Activated CD4-positive, alpha-beta memory T cell treated with anti-CD3 and anti-CD28 coated beads, Interleukin-2, amount 10 ng/mL, durations not matched to agents 7 days and 5 days (primary cell): ENCODE measurements at regions of chr11 and their contacts with region 1.

Region 1: GRCh38 chr11:95067039-95067840 is 521 bp downstream of the SRSF8 start:
- DNase-seq: peak; percentile 76
- H3K4me3 Mint-ChIP-seq: peak overlapping the region; percentile 92
- H3K27ac Mint-ChIP-seq: peak overlapping the region; percentile 94
- H3K4me1 Mint-ChIP-seq: peaks cover 25% of the 10 kb centered on the region
- H3K27me3 Mint-ChIP-seq: peaks cover under 1% of the 10 kb centered on the region

Region 2: GRCh38 chr11:94128746-94129511 is 938.3 kb before region 1 on chr11 and contains the start of gene PANX1:
- CTCF ChIA-PET with region 1: no interaction called
- POLR2A ChIA-PET with region 1: interaction called, 11 read pairs
- DNase-seq: peak; percentile 77
- H3K4me3 Mint-ChIP-seq: no peak within 1 kb of the TSS
- H3K27ac Mint-ChIP-seq: no peak within 1 kb of the TSS
- H3K4me1 Mint-ChIP-seq: peaks cover 22% of the 10 kb centered on the region
- H3K27me3 Mint-ChIP-seq: no peaks in the 10 kb centered on the region
- total RNA-seq, gene PANX1: 13.7 to 13.9 TPM

Region 3: GRCh38 chr11:95014184-95014821 is 52.9 kb before region 1 on chr11:
- CTCF ChIA-PET with region 1: no interaction called
- POLR2A ChIA-PET with region 1: no interaction called
- DNase-seq: no peak
- H3K4me3 Mint-ChIP-seq: no peak overlapping the region
- H3K27ac Mint-ChIP-seq: no peak overlapping the region
- H3K4me1 Mint-ChIP-seq: no peaks in the 10 kb centered on the region
- H3K27me3 Mint-ChIP-seq: no peaks in the 10 kb centered on the region

Region 4: DNA sequence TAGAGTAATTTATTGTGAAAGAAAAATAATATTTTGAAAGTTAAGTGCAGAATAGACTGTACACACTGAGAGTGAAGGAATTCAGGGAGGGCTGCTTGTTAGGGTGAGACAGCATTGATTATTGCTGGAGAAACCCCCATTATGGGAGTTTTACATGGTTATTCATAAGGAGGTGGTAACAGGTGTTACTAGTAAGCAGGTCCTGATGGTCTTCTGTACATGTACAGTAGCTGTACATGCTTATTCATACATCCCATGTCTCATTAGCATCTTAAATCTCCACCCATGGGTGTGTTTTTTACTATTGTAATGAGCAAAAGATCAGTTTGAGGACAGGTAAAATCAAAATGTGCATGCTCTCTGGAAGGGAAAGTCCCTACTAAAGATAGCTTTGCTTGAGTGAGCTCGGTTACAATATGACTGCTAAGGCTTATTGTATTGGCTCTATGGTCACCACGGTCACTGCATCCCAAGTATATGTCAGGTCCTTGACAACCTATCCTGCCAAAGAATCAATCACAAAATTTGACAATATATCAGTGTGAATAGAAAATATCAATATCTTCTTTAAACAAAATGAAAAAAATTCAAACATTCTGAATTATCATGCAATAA is 11.8 kb before region 1 on chr11:
- CTCF ChIA-PET with region 1: interaction called, 7 read pairs
- POLR2A ChIA-PET with region 1: interaction called, 22 read pairs
- DNase-seq: no peak
- H3K4me3 Mint-ChIP-seq: no peak overlapping the region
- H3K27ac Mint-ChIP-seq: no peak overlapping the region
- H3K4me1 Mint-ChIP-seq: no peaks in the 10 kb centered on the region
- H3K27me3 Mint-ChIP-seq: peaks cover 19% of the 10 kb centered on the region

Region 5: GRCh38 chr11:95089620-95090542 is 22.6 kb after region 1 on chr11 and contains the start of gene ENDOD1:
- CTCF ChIA-PET with region 1: interaction called, 167 read pairs
- POLR2A ChIA-PET with region 1: interaction called, 253 read pairs
- DNase-seq: peak; percentile 88
- H3K4me3 Mint-ChIP-seq: peak within 1 kb of the TSS; percentile 84
- H3K27ac Mint-ChIP-seq: peak within 1 kb of the TSS; percentile 93
- H3K4me1 Mint-ChIP-seq: peaks cover 67% of the 10 kb centered on the region
- H3K27me3 Mint-ChIP-seq: no peaks in the 10 kb centered on the region
- total RNA-seq, gene ENDOD1: 20.6 to 22.2 TPM

Region 6: GRCh38 chr11:95165638-95166037 is 98.4 kb after region 1 on chr11:
- CTCF ChIA-PET with region 1: no interaction called
- POLR2A ChIA-PET with region 1: no interaction called
- DNase-seq: no peak
- H3K4me3 Mint-ChIP-seq: no peak overlapping the region
- H3K27ac Mint-ChIP-seq: no peak overlapping the region
- H3K4me1 Mint-ChIP-seq: peaks cover 13% of the 10 kb centered on the region
- H3K27me3 Mint-ChIP-seq: no peaks in the 10 kb centered on the region

Region 7: DNA sequence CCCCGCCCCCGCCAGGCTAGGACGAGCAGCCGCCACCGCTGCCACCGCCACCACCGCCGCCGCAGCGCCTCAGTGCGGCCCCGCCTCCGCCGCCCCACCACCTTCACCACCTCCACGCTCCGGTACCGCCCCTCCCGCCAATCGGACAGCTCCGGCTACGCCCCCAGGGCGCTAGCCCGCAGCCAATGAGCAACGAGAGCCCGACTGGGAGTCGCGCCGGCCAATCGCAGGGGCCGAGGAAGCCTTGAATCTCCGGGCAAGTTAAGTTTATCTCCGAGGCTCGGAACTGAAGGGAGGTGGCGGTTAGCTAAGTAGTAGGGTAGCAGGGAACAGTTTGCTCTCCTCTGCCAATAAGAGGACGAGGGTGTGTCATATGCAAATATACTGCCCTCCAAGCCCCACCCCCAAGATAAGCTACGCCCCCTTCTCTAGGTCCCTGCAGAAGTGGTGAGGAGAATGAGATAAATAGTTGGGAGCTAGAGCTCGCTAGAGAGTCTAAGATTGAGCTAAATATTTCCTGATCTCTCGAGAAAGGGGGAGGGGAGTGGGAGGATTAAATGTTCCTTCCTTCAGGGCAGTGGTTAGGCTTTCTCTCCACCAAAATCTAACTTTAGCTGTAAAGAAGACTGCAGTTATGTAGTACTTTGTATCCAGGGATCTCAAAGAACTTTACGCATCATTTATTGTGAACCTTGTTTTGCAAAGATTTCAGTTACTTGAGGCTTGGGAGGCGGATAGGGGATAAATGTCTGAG is 164.1 kb after region 1 on chr11 and contains the start of gene SESN3:
- CTCF ChIA-PET with region 1: interaction called, 18 read pairs
- POLR2A ChIA-PET with region 1: interaction called, 33 read pairs
- DNase-seq: peak; percentile 99
- H3K4me3 Mint-ChIP-seq: no peak within 1 kb of the TSS
- H3K27ac Mint-ChIP-seq: peak within 1 kb of the TSS; percentile 79
- H3K4me1 Mint-ChIP-seq: peaks cover 36% of the 10 kb centered on the region
- H3K27me3 Mint-ChIP-seq: peaks cover 12% of the 10 kb centered on the region
- total RNA-seq, gene SESN3: 23.2 to 24.6 TPM